ENCODE measurements at regions of chr3 and their contacts with region 1.

Region 1: DNA sequence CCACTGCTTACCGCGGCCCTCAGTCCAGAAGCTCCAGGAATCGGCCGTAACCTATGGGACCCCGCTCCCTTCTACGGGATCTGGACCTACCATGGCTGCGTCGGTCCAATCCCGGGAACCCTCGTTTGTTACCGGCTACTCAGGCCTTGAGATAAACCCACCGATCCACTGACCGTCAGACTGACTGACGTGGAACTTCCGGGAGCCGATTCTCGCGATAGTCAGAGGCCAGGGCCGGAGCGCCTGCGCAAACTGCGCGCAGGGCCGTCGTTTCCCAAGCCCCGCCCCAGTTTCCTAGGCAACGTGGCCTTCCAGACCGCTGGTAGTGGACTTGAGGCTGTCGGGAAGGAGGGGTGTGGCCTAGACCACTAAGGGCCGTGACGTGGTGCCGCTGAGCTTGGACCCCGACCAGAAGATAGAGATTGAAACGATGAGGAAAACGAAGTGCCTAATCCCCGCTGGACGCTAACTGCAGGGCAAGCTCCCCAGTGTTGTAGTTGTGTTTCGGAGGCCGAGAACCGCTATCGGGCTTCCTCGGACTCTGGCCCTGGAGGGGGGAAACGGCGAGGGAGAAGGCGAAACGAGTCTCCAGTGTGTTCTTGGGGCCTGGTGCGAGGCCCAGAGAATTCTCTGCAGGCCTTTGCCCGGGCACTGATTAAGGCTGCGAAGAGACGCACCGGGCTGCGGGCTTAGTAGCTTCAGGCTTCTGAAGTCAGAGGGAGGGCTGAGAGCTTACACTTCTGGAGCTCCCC is at the start of gene COPB2:
- H3K4me3 Mint-ChIP-seq: peak within 1 kb of the TSS; percentile 80
- H3K27ac Mint-ChIP-seq: peak within 1 kb of the TSS; percentile 95
- H3K4me1 Mint-ChIP-seq: peaks cover 29% of the 10 kb centered on the region
- H3K27me3 Mint-ChIP-seq: no peaks in the 10 kb centered on the region

Region 2: DNA sequence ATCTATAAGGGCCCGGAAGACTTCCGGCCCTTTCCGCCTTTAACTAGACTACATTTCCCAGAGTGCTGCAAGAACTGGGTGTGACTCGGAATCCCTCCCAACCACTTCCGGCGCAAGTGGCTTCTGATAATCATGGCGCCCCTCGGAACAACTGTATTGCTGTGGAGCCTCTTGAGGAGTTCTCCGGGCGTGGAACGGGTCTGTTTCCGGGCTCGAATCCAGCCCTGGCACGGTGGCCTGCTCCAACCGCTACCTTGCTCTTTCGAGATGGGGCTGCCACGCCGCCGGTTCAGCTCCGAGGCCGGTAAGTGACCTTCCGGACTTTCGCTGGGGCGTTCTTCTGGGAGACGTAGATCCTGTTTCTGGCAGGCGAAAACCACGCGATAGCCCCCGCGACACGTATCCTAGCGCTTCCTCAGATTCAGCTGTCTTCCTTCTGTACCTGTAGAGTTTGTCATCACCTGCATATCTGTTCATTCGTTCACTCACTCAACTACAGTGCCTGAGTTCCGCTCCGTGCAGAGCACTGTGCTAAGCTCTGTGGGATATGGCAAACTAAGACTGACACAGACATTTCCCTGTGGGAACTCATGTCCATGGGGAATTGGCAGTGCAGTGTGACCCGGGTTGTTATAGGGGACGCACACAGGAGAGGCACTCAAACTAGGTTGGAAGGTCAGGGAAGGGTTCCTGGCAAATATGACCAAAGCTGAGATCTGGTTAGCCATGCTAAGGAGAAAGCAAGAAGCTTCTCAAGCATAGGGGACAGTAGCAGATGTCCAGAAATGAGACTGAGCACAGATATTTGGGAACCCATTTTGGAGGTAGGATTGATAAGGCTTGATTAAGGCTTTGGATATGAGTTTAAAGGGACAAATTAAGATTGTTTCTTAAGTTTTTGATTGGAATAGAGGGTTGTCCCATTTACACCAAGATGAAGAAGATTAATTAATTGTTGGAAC is 45.5 kb before region 1 on chr3 and contains the start of gene MRPS22:
- intact Hi-C with region 1: loop called (anchors 1 kb)
- H3K4me3 Mint-ChIP-seq: no peak within 1 kb of the TSS
- H3K27ac Mint-ChIP-seq: no peak within 1 kb of the TSS
- H3K4me1 Mint-ChIP-seq: peaks cover 7% of the 10 kb centered on the region
- H3K27me3 Mint-ChIP-seq: peaks cover 4% of the 10 kb centered on the region

Region 3: GRCh38 chr3:140941434-140942220 is 1552.0 kb after region 1 on chr3 and contains the start of gene SLC25A36:
- intact Hi-C with region 1: loop called (anchors 5 kb)
- H3K4me3 Mint-ChIP-seq: peak within 1 kb of the TSS; percentile 98
- H3K27ac Mint-ChIP-seq: peak within 1 kb of the TSS; percentile 95
- H3K4me1 Mint-ChIP-seq: peaks cover 24% of the 10 kb centered on the region
- H3K27me3 Mint-ChIP-seq: peaks cover 8% of the 10 kb centered on the region

Measured in dendritic cell treated with granulocyte-macrophage colony-stimulating factor and Interleukin-4, amounts not matched to agents 40 ng/mL and 50 ng/mL, for 4 days (primary cell).